AG04450 (cell line): ENCODE measurements at regions of chr4 and their contacts with region 1.

Region 1: DNA sequence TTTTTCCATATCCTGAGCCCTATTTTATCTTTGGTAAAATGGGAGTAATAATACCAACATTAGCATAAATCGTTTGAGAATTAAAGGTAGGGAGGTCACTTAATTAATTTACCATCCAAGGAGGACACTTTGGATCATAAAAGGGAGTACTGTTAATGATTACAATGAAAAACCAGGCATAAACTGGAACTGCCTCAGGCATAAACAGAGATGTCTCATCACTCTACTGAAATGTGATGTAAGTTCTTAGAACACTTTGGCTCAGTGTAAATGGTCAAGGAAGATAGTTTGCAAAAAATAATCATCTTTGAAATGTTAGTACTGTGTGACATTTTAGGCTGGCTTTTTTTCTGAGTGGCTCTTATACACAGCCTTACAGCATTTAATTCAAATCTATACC is 268.7 kb downstream of the SLC39A8 start:
- DNase-seq: no peak
- H3K4me3 ChIP-seq: no peak overlapping the region
- H3K27ac ChIP-seq: no peak overlapping the region
- H3K27me3 ChIP-seq: no peaks in the 10 kb centered on the region
- CTCF ChIP-seq: no peak

Region 2: DNA sequence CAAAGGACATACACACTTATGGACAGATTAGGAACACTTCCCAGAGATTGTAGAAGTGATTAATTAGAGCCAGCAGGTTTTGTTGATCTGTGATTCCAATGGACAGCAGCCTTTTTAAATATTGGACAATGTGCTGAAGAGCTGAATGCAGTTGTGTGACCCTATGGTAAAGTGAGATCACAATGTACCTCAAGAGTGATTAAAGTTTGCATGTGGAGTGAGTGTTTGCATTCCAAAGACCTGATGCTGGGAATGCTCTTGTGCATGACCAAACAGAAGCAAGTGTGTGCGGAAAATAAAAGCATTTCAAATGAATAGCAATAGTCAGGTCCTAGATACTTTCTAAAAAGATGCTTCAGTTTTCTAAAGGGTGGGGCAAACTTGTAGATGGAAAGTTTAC is 132.0 kb before region 1 on chr4:
- CTCF ChIA-PET with region 1: interaction called, 11 read pairs
- POLR2A ChIA-PET with region 1: no interaction called
- DNase-seq: peak; percentile 29
- H3K4me3 ChIP-seq: no peak overlapping the region
- H3K27ac ChIP-seq: no peak overlapping the region
- H3K27me3 ChIP-seq: no peaks in the 10 kb centered on the region
- CTCF ChIP-seq: no peak

Region 3: DNA sequence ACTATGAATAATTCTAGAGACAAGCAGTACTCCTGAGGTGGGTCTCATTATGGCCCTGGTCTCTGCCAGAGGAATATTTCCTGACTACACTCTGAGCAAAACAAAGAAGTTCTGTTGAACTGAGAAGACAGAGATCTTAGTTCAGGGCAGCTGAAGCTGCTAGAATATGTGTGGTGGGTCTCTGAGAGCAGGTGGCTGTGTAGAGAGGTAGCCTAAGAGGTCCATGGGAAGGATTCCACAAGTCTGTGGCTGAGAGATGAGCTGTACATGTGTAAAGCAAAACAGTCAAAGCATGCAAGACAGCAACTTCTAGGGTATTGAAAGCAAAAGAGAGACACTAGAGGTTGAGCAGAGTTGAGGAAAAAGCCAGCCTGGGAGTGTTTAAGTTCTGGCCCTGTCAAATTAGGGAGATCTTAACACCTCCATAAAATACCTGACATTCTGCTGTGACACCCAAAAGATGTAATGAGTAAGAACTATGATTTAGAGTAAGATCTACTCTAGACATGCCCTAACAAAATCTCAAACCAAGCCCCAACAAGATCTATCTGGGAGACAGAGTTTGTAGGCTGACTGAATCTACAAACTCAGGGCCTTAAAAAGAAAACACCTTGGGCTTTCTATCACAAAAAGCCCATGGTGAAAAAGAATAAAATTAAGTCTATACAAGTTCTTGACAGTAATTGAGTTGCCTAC is 11.7 kb before region 1 on chr4:
- CTCF ChIA-PET with region 1: no interaction called
- POLR2A ChIA-PET with region 1: no interaction called
- DNase-seq: no peak
- H3K4me3 ChIP-seq: no peak overlapping the region
- H3K27ac ChIP-seq: no peak overlapping the region
- H3K27me3 ChIP-seq: no peaks in the 10 kb centered on the region
- CTCF ChIP-seq: no peak